ENCODE measurements at regions of chr2 and their contacts with region 1.

Region 1: DNA sequence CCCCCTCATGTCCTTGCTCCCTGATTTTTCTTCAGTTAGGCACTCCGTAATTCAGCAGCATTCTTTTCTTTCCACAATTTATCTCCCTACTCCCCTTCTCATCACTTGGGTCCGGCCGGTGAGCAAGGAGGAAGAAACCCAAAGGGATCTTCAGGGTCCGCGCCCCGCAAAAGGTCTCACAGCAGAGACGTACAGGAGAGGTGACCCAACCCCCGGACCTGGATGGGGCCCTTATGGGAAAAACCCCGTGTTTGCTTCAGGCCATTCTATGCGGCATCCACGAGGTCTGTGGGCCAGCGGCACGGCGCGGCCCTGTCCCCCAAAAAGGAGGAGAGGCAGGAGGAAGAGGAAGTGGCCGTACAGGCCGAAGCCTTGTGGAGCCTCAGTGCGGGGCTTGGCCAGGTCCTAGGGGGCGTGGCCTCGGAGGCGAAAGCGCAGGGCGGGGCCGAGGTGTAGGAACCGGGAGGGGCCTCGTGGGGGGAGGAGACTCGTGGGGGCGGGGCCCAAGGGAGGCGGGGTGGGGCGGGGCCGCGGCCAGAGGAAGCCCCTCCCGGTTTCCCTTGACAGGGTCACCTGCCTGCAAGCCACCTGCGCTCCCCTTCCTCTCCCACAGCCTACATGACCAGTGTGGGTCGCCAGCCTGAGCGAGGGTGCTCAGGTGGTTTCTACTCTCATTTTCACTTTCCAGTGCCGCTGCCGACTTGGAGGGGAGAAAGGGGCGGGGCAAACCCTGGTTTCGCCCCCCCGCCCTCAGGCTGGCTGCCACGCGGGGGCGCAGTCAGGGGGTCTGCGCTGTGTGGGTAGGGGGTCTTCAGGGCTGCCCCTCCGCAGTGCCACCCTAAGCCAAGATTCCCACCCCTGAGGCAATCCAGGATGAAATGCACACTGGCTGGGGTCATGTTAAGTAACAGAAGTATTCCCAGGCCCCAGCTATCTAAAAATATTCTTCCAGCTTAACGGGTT is 156.4 kb upstream of the XPO1 start:
- DNase-seq: peak; percentile 97
- H3K4me3 ChIP-seq: peak overlapping the region; percentile 80 to 88 (median 85)
- H3K27ac ChIP-seq: peak overlapping the region; percentile 82 to 86 (median 84)
- H3K4me1 ChIP-seq: peaks cover 0 to 14% (median 12%) of the 10 kb centered on the region in 4 donors
- H3K27me3 ChIP-seq: no peaks in the 10 kb centered on the region
- CTCF ChIP-seq: peak; percentile 5 to 49 (median 25)
- EP300 ChIP-seq: no peak
- POLR2A ChIP-seq: peak; percentile 33 to 60

Region 2: GRCh38 chr2:61470965-61471904 is 223.4 kb before region 1 on chr2 and contains the start of gene USP34:
- intact Hi-C with region 1: loop called (anchors 5 kb)
- DNase-seq: peak; percentile 97
- H3K4me3 ChIP-seq: peak within 1 kb of the TSS; percentile 79 to 90 (median 84)
- H3K27ac ChIP-seq: peak within 1 kb of the TSS; percentile 95 to 99 (median 97)
- H3K4me1 ChIP-seq: peaks cover 0 to 40% (median 30%) of the 10 kb centered on the region in 4 donors
- H3K27me3 ChIP-seq: no peaks in the 10 kb centered on the region
- CTCF ChIP-seq: no peak
- EP300 ChIP-seq: peak in 1 of 4 donors; percentile 12
- POLR2A ChIP-seq: peak; percentile 75 to 79
- total RNA-seq, gene USP34: 135 to 158 (median 140) TPM

Region 3: GRCh38 chr2:61775956-61776570 is 81.5 kb after region 1 on chr2:
- intact Hi-C with region 1: no loop called
- DNase-seq: no peak
- H3K4me3 ChIP-seq: no peak overlapping the region
- H3K27ac ChIP-seq: no peak overlapping the region
- H3K4me1 ChIP-seq: no peaks in the 10 kb centered on the region
- H3K27me3 ChIP-seq: no peaks in the 10 kb centered on the region
- CTCF ChIP-seq: no peak
- EP300 ChIP-seq: no peak
- POLR2A ChIP-seq: no peak

Region 4: GRCh38 chr2:61854474-61855182 is 160.0 kb after region 1 on chr2:
- intact Hi-C with region 1: loop called (anchors 5 kb)
- DNase-seq: peak; percentile 95
- H3K4me3 ChIP-seq: peak overlapping the region; percentile 66 to 87 (median 77)
- H3K27ac ChIP-seq: peak overlapping the region; percentile 88 to 91 (median 90)
- H3K4me1 ChIP-seq: peaks cover 0 to 14% (median 13%) of the 10 kb centered on the region in 4 donors
- H3K27me3 ChIP-seq: no peaks in the 10 kb centered on the region
- CTCF ChIP-seq: no peak
- EP300 ChIP-seq: no peak
- POLR2A ChIP-seq: no peak